Posterior cingulate gyrus (tissue), 11 donors: ENCODE measurements at regions of chr7 and their contacts with region 1.

Region 1: DNA sequence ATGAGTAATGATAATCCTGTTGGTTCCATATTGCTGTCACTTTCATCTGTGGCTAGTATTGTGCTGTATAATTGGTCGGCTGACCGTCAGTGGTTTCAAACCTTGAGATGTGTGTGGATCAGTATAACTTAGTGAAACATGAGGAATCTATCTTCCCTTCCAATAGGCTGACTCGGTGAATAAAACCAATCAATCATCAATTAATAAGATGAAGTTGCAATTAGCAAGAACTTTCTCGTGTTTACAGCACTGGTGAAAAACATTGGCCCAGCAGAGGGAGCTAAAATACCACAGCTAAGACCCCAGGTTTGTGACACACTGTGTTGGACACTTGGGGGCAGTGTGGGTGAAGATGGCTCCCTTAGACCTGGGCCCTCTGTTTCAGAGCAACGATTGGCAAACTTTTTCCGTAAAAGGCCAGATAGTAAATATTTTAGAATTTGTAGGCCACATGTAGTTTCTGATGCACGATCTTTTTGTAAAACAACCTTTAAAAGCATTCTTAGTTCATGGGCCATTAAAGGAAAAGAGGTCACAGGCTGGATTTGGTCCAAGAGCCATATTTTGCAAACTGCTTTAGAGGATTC is 47.8 kb downstream of the STRA8 start:
- DNase-seq: peak; percentile 60 to 96 (median 80)

Region 2: DNA sequence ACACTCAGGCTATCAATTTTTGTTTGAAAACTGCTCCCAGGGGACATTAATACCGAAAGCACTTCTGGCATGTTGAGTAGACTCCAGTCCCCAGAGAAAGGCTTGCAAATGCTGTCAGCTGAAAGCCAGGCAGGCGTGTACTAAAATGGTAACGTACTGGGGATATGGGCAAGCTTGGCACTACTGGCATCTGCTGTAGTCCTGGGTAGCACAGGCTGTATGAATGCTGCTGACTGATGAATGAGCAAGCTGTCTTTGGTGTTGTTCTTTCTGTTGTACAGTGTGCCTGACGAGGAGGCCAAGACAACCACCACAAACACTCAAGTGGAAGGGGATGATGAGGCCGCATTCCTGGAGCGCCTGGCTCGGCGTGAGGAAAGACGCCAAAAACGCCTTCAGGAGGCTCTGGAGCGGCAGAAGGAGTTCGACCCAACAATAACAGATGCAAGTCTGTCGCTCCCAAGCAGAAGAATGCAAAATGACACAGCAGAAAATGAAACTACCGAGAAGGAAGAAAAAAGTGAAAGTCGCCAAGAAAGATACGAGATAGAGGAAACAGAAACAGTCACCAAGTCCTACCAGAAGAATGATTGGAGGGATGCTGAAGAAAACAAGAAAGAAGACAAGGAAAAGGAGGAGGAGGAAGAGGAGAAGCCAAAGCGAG is 348.6 kb before region 1 on chr7:
- intact Hi-C with region 1: no loop called
- DNase-seq: peak in 5 of 10 donors; percentile 7 to 86 (median 25)

Region 3: GRCh38 chr7:135170274-135170997 is 111.0 kb before region 1 on chr7 and contains the start of gene CYREN:
- intact Hi-C with region 1: no loop called
- DNase-seq: peak; percentile 87 to 98 (median 92)

Region 4: DNA sequence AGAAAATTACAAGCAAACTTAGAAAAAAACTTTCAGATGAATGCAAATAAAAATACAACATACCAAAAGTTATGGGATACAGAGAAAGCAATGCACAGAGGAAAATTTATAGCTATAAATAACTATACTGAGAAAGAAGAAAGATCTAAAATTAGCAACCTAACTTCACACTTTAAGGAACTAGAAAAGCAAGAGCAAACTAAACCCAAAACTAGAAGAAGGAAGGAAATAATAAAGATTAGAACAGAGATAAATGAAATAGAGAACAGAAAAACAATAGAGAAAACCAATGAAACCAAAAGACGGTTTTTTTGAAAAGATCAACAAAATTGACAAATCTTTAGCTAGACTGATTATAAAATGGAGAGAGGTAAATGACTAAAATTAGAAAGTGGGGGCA is 57.4 kb before region 1 on chr7:
- intact Hi-C with region 1: no loop called
- DNase-seq: no peak

Region 5: GRCh38 chr7:135335628-135336139 is 54.2 kb after region 1 on chr7:
- intact Hi-C with region 1: loop called (anchors 10 kb)
- DNase-seq: peak in 5 of 10 donors; percentile 21 to 85 (median 27)

Region 6: DNA sequence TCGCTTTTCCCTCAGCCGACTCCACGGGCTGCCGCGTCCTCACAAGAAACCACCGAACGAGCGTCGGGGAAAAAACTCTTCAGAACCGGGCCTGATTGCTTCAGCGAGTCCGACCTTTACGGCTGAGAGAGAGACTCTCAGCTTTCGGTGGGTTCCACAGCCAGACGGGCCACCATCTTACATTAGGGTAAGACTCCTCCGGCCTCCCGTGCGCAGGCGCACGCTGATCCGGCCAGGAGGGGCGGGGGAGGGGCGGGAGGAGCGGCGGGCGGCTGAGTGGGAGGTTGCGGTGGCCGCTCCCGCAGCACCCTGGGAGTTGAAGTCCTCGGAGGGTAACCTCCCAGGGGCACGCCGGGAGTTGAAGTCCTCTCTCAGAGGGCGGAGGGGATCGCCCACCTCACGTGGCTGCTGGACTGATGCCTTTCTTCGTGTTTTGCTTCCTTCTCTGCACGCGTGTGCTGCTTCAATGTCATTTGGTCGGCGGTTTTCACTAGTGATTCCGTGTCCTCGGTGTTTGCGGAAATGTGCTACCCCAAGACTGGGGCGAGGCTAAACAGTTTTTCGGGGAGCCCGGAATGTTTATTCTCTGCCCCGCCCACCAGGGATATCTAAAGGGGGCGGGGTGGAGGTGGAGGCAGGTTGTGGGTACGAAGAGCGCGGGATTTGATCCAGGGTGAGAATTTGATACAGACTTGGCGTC is 228.6 kb after region 1 on chr7 and contains the start of gene CNOT4:
- intact Hi-C with region 1: loop called (anchors 1 kb)
- DNase-seq: peak; percentile 93 to 99 (median 96)

Region 7: DNA sequence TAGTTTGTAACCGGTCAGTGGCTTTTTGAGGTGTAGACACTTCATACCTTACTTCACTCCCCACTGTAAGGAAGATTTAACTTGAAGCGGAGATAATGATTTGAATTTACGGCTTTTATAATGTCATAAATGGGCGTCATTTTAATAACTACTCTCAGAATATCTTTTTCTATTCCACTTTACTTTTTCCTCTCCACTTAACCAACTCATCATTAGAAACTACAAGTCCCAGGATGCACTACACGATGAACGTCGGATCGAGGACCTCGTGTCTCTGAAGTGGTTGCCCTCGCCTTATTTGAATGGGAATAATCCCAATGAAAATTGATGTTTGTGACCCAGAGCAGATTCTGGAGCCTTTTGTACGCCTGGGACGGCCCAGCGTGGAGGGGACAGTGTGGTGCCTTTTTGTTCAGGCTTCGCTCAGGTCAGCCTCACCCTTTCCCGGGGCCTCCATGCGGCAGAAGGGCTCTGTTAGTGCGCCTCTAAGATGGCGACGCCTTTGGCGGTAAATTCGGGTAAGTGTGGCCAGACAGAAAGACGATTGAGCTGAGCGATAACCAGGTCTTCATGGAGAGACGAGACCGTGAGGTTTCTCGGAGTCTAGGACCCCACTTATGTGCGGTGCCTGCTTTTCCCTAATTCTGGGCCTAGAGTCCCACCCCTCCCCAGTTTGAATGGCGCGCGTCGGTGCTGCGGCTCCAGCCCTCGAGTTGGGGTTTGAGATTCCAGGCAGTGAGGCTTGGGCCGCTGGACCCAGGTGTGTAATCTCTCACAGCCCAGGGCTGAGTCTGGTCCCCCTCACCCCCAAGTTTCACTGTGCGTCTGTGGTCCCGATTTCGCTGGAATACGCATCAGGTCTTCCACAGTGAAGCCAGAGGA is 276.2 kb after region 1 on chr7 and contains the start of gene NUP205:
- intact Hi-C with region 1: loop called (anchors 1 kb)
- DNase-seq: peak; percentile 41 to 95 (median 72)

Region 8: GRCh38 chr7:135645296-135645904 is 363.9 kb after region 1 on chr7:
- intact Hi-C with region 1: loop called (anchors 1 kb)
- DNase-seq: no peak

Region 9: GRCh38 chr7:135662373-135663114 is 381.1 kb after region 1 on chr7 and contains the start of gene STMP1:
- intact Hi-C with region 1: loop called (anchors 5 kb)
- DNase-seq: peak; percentile 91 to 99 (median 95)